ENCODE measurements at regions of chr4 and their contacts with region 1.

Region 1: GRCh38 chr4:98467627-98468072 is 190.8 kb downstream of the TSPAN5 start:
- DNase-seq: no peak
- ATAC-seq: peak; percentile 98
- H3K4me3 ChIP-seq: no peak overlapping the region
- H3K27ac ChIP-seq: no peak overlapping the region
- H3K4me1 ChIP-seq: no peaks in the 10 kb centered on the region
- H3K27me3 ChIP-seq: peaks cover 0 to 2% of the 10 kb centered on the region in 2 experiments; a peak in 1 of 4 replicates
- CTCF ChIP-seq: peak; percentile 74 to 90 (median 76)
- EP300 ChIP-seq: no peak
- POLR2A ChIP-seq: no peak
- RAD21 ChIP-seq: peak; percentile 95

Region 2: DNA sequence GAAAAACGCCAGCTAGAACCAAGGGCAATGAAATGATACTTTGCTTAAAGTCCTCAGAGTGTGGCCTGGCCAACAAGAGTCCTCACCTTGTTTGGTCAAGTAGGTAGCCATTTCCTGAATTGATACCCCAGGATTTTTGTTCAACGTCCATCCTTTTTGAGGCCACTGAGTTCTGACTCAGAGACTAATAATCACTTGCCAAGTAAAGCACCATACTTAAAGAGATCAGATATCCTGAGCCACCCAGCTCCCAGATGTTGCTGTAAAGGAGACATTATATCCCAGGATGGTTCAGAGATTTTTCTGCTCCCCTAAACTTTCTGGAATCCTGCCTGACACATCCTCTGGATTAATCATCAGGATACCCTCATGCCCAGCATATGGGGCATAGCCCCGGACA is 15.6 kb before region 1 on chr4:
- CTCF ChIA-PET with region 1: interaction called, 21 read pairs
- POLR2A ChIA-PET with region 1: interaction called, 3 read pairs
- RAD21 ChIA-PET with region 1: interaction called, 4 read pairs
- SMC1A ChIA-PET with region 1: interaction called, 5 read pairs
- in situ Hi-C with region 1: no loop called
- intact Hi-C with region 1: no loop called
- DNase-seq: no peak
- ATAC-seq: no peak
- H3K4me3 ChIP-seq: no peak overlapping the region
- H3K27ac ChIP-seq: no peak overlapping the region
- H3K4me1 ChIP-seq: peaks cover 12% of the 10 kb centered on the region
- H3K27me3 ChIP-seq: no peaks in the 10 kb centered on the region
- CTCF ChIP-seq: no peak
- EP300 ChIP-seq: no peak
- POLR2A ChIP-seq: no peak
- RAD21 ChIP-seq: no peak

Region 3: DNA sequence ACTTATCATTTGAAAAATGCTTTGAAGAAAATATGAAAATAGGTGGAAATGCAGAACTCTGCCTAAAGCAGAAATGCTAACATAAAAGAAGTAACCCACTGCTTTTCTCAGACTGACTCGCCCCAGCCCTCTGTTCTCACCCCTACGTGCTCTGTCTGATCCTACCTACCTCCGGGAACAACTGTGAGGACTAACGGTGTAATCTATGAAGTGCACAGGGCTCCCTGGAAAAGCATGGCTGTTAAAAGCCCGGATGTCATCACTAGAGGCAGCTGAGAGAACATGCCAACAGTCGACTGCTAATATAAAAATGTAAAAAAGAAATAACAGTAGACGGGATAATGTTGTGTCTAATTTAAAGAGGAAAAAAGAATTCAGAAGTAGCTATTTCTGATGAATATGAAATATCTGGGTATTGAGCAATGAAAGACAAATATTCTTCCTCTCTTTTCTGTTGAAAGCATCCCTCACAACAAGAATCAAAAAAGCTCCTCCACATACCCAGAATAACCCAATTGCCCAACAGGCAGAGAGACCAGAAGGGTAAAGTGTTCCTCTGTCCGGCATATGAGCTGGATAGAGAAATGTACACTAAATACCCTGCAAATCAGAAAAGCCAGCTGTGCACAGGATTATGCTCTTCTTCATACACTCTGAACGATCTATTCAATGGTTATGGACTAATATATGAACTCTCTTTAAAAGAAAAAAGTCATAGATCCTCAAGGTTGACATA is 60.1 kb after region 1 on chr4:
- CTCF ChIA-PET with region 1: interaction called, 3 read pairs
- POLR2A ChIA-PET with region 1: no interaction called
- RAD21 ChIA-PET with region 1: no interaction called
- SMC1A ChIA-PET with region 1: interaction called, 10 read pairs
- in situ Hi-C with region 1: no loop called
- intact Hi-C with region 1: no loop called
- DNase-seq: no peak
- ATAC-seq: no peak
- H3K4me3 ChIP-seq: no peak overlapping the region
- H3K27ac ChIP-seq: no peak overlapping the region
- H3K4me1 ChIP-seq: no peaks in the 10 kb centered on the region
- H3K27me3 ChIP-seq: peaks cover 0 to 2% of the 10 kb centered on the region in 2 experiments; a peak in 1 of 4 replicates
- CTCF ChIP-seq: no peak
- EP300 ChIP-seq: no peak
- POLR2A ChIP-seq: no peak
- RAD21 ChIP-seq: no peak

Region 4: GRCh38 chr4:98728433-98728832 is 260.8 kb after region 1 on chr4:
- CTCF ChIA-PET with region 1: interaction called, 7 read pairs
- POLR2A ChIA-PET with region 1: no interaction called
- RAD21 ChIA-PET with region 1: interaction called, 13 read pairs
- SMC1A ChIA-PET with region 1: interaction called, 5 read pairs
- in situ Hi-C with region 1: no loop called
- intact Hi-C with region 1: no loop called
- DNase-seq: no peak
- ATAC-seq: no peak
- H3K4me3 ChIP-seq: no peak overlapping the region
- H3K27ac ChIP-seq: no peak overlapping the region
- H3K4me1 ChIP-seq: no peaks in the 10 kb centered on the region
- H3K27me3 ChIP-seq: no peaks in the 10 kb centered on the region
- CTCF ChIP-seq: no peak
- EP300 ChIP-seq: no peak
- POLR2A ChIP-seq: no peak
- RAD21 ChIP-seq: no peak

Region 5: DNA sequence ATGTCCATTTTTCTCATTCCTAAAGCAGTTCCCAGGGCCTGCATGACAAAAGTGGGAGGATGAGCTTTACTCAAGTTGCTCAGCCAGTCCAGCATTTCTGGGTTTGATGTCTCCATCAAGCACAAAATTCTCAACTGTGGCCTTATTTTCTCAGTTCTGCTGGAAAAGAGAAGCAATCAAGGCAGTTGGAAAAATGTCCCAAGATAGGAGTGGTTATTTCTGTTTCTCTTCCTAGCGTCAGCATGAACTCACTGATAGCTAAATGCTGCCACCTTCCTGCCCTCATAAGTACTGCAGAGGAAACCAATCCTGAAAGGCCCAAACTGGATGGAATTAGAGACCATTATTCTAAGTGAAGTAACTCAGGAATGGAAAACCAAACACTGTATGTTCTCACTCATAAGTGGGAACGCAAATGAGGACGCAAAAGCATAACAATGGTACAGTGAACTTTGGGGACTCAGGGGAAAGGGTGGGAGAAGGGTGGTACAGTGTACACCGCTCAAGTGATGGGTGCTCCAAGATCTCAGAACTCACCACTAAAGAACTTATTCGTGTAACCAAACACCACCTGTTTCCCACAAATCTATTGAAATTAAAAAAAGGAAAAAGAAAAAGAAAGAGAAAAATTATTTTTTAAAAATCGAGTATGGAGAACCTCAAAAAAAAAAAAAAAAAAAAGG is 937.9 kb after region 1 on chr4:
- CTCF ChIA-PET with region 1: interaction called, 20 read pairs
- POLR2A ChIA-PET with region 1: no interaction called
- RAD21 ChIA-PET with region 1: interaction called, 8 read pairs
- SMC1A ChIA-PET with region 1: interaction called, 11 read pairs
- in situ Hi-C with region 1: loop called (anchors 25 kb)
- intact Hi-C with region 1: loop called (anchors 2 kb)
- DNase-seq: peak; percentile 38
- ATAC-seq: peak; percentile 40
- H3K4me3 ChIP-seq: no peak overlapping the region
- H3K27ac ChIP-seq: peak overlapping the region; percentile 28; the same call in 1 of the 2 replicates
- H3K4me1 ChIP-seq: peaks cover 16% of the 10 kb centered on the region
- H3K27me3 ChIP-seq: no peaks in the 10 kb centered on the region
- CTCF ChIP-seq: peak; percentile 86 to 90 (median 87)
- EP300 ChIP-seq: no peak
- POLR2A ChIP-seq: no peak
- RAD21 ChIP-seq: peak; percentile 97